ENCODE measurements at regions of chr11 and their contacts with region 1.

Region 1: DNA sequence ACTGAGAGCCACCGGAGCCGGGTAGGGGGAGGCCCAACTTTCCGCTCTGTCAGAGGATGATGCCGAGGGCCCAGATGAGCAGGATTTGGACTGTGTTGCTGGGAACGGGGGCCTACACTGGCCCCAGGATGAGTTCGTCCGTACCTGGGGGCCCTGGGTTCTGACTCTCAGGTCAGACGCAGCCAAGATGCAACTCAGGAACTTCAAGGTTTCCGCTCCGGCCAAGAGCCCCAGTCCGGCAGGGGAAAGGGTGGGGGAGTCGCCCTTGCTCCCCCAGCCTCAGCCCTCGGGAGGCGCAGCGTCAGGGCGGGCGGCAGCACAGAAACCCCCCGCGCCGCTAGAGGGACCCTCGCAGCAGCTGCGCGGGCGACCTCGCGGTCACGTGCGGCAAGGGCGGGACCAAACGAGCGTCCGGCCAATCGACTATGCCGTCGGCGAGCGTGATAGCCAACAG is 241 bp upstream of the ARL2 start:
- DNase-seq: peak; percentile 85
- H3K4me3 Mint-ChIP-seq: peak overlapping the region; percentile 94
- H3K27ac Mint-ChIP-seq: peak overlapping the region; percentile 98
- H3K4me1 Mint-ChIP-seq: peaks cover 30% of the 10 kb centered on the region
- H3K27me3 Mint-ChIP-seq: no peaks in the 10 kb centered on the region

Region 2: GRCh38 chr11:64846998-64847666 is 166.6 kb before region 1 on chr11:
- CTCF ChIA-PET with region 1: interaction called, 23 read pairs
- POLR2A ChIA-PET with region 1: interaction called, 4 read pairs
- DNase-seq: peak; percentile 92
- H3K4me3 Mint-ChIP-seq: no peak overlapping the region
- H3K27ac Mint-ChIP-seq: no peak overlapping the region
- H3K4me1 Mint-ChIP-seq: peaks cover 54% of the 10 kb centered on the region
- H3K27me3 Mint-ChIP-seq: no peaks in the 10 kb centered on the region

Region 3: DNA sequence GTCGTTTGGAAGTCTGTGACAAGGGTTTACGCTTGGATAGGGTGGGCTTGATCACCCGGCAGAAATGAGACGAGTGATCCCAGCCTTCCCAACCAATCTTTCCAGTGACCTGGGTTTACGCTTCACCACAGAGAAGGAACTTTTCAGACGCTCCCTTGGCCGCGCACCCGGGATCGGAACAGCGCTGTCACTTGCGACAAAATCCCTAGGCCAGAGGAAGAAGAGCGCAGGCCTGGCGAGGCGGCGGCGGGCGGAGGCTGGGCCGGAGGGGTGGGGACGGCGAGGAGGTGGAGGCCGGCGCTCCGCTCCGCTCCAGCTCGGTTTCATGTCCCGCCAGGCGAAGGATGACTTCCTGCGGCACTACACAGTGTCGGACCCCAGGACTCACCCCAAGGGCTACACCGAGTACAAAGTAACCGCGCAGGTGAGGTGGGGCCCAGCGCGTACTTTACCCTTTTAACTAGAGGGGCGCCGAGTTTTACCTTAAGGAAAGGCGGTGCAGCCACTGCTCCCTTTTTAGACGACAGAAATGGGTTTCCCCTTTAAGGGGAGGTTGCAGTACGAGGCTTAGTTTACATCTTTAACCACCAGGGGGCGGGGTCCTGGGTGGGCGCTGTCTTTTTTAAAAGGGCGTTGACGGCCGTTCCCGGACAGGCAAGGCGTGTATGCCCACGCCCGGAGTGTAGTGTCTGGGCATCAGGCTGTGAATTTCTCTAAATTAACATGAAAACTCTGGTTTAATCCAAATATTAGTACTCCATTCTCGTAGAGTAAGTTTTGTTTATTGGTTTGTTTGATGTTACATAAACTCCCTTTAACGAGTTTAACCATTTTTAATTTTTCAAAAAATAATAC is 13.7 kb after region 1 on chr11 and contains the start of gene SNX15:
- CTCF ChIA-PET with region 1: interaction called, 23 read pairs
- POLR2A ChIA-PET with region 1: interaction called, 56 read pairs
- DNase-seq: peak; percentile 94
- H3K4me3 Mint-ChIP-seq: peak within 1 kb of the TSS; percentile 78
- H3K27ac Mint-ChIP-seq: peak within 1 kb of the TSS; percentile 82
- H3K4me1 Mint-ChIP-seq: peaks cover 27% of the 10 kb centered on the region
- H3K27me3 Mint-ChIP-seq: no peaks in the 10 kb centered on the region
- total RNA-seq, gene SNX15: 24.3 to 24.6 TPM

Region 4: GRCh38 chr11:65078151-65078550 is 64.4 kb after region 1 on chr11:
- CTCF ChIA-PET with region 1: interaction called, 16 read pairs
- POLR2A ChIA-PET with region 1: interaction called, 10 read pairs
- DNase-seq: peak; percentile 77
- H3K4me3 Mint-ChIP-seq: peak overlapping the region; percentile 5
- H3K27ac Mint-ChIP-seq: peak overlapping the region; percentile 74
- H3K4me1 Mint-ChIP-seq: peaks cover 66% of the 10 kb centered on the region
- H3K27me3 Mint-ChIP-seq: no peaks in the 10 kb centered on the region

Region 5: GRCh38 chr11:65095974-65096806 is 82.5 kb after region 1 on chr11 and contains the start of gene VPS51:
- CTCF ChIA-PET with region 1: interaction called, 12 read pairs
- POLR2A ChIA-PET with region 1: interaction called, 11 read pairs
- DNase-seq: peak; percentile 91
- H3K4me3 Mint-ChIP-seq: peak within 1 kb of the TSS; percentile 97
- H3K27ac Mint-ChIP-seq: peak within 1 kb of the TSS; percentile 96
- H3K4me1 Mint-ChIP-seq: peaks cover 25% of the 10 kb centered on the region
- H3K27me3 Mint-ChIP-seq: no peaks in the 10 kb centered on the region
- total RNA-seq, gene VPS51: 117 to 123 TPM

Region 6: DNA sequence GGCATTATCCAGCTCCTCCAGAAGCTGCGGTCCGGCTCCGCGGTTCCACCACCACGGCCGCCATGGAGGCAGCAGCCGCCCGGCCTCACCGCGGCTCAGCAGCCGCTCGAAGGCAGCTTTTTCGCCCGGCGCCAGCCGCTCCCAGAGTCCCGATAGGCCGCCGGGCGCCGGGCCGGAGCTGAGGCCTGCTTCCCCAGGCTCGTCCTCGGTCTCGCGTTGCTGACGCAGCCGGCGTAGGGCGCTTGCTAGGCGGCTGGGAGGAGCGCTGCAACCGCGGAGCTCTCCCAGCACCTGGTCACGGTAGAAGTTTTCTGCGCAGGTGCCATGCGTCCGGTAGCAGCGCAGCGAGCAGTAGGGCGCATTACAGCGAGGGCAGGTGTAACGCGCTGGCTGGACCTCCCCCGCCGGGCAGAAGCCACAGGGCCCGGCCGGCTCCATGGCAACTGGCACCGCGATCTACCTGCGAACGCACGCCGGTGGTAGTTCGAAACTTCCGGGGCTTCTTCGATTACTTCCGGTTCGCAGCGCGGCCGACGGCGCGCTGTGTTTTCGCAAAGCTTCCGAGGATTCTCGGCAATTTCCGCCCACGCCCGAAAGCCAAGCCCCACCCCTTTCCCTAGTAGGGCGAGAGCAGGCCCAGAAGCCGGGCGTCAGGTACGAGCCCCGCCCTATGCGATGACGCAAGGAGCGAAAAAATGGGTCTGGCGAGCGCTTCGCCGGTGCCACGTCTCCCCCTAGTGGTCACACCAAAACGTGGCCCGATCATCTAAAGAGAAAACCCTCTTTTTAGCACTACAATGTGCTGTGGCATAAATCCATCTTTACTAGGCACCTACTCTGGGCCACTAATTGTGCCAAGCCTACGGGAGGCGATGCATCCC is 103.7 kb after region 1 on chr11 and contains the start of gene ZNHIT2:
- CTCF ChIA-PET with region 1: interaction called, 12 read pairs
- POLR2A ChIA-PET with region 1: interaction called, 11 read pairs
- DNase-seq: peak; percentile 100
- H3K4me3 Mint-ChIP-seq: peak within 1 kb of the TSS; percentile 90
- H3K27ac Mint-ChIP-seq: peak within 1 kb of the TSS; percentile 95
- H3K4me1 Mint-ChIP-seq: peaks cover 69% of the 10 kb centered on the region
- H3K27me3 Mint-ChIP-seq: no peaks in the 10 kb centered on the region
- total RNA-seq, gene ZNHIT2: 8.1 to 8.6 TPM

Region 7: GRCh38 chr11:65204646-65205601 is 191.2 kb after region 1 on chr11:
- CTCF ChIA-PET with region 1: no interaction called
- POLR2A ChIA-PET with region 1: no interaction called
- DNase-seq: peak; percentile 51
- H3K4me3 Mint-ChIP-seq: no peak overlapping the region
- H3K27ac Mint-ChIP-seq: no peak overlapping the region
- H3K4me1 Mint-ChIP-seq: peaks cover 7% of the 10 kb centered on the region
- H3K27me3 Mint-ChIP-seq: no peaks in the 10 kb centered on the region

Region 8: GRCh38 chr11:65329944-65330403 is 316.3 kb after region 1 on chr11:
- CTCF ChIA-PET with region 1: no interaction called
- POLR2A ChIA-PET with region 1: no interaction called
- DNase-seq: peak; percentile 82
- H3K4me3 Mint-ChIP-seq: no peak overlapping the region
- H3K27ac Mint-ChIP-seq: no peak overlapping the region
- H3K4me1 Mint-ChIP-seq: peaks cover 14% of the 10 kb centered on the region
- H3K27me3 Mint-ChIP-seq: no peaks in the 10 kb centered on the region

Measured in activated CD4-positive, alpha-beta memory T cell treated with anti-CD3 and anti-CD28 coated beads, Interleukin-2, amount 10 ng/mL, durations not matched to agents 7 days and 5 days (primary cell).